ENCODE measurements at regions of chr17 and their contacts with region 1.

Region 1: DNA sequence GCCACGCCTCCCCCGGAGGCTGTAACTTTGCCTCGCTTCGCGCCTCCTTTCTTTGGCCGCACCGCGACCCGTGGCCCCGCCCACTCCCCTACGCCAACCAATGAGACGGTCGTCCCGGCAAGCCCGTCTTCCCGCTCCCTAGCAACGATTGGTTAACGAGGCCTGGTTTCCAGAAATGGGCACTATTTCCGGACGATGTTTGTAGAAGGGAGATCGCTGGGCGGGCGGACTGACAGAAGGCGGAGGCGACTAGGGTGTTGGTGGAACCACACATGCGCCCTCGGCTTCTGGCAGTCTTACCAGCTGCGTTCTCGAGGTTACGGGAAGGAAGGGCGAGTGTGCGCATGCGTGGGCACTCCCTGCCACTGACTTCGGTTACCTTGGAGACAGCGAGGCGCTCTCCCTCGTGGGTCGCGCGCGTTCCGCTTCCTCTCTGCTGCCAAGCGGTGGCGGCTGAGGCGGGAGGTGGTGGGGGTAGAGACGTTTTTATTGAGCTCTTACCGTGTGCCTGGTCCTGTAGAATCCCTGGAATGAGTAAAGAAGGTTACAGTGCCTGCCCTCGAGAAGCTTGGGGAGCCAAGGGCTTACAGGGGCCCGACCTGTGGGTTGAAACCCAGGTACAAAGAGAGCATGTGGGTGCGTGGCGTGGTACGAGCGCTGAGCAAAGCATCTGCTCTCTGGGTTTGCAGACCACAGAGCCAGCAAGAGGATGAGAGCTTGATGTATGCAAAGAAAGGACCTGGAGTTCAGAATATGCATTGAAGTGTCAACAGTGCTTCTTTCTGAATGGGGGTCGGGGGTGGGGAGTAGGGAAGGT is 500 bp upstream of the MAP3K14 start:
- DNase-seq: peak; percentile 95 to 100 (median 100)
- ATAC-seq: peak; percentile 85 to 86
- H3K4me3 Mint-ChIP-seq: peak overlapping the region; percentile 76 to 96 (median 94)
- H3K27ac Mint-ChIP-seq: peak overlapping the region; percentile 88 to 99 (median 96)
- H3K4me1 Mint-ChIP-seq: peaks cover 56 to 88% (median 85%) of the 10 kb centered on the region in 4 donors
- H3K27me3 Mint-ChIP-seq: peaks cover 0 to 4% (median 0%) of the 10 kb centered on the region in 5 donors

Region 2: DNA sequence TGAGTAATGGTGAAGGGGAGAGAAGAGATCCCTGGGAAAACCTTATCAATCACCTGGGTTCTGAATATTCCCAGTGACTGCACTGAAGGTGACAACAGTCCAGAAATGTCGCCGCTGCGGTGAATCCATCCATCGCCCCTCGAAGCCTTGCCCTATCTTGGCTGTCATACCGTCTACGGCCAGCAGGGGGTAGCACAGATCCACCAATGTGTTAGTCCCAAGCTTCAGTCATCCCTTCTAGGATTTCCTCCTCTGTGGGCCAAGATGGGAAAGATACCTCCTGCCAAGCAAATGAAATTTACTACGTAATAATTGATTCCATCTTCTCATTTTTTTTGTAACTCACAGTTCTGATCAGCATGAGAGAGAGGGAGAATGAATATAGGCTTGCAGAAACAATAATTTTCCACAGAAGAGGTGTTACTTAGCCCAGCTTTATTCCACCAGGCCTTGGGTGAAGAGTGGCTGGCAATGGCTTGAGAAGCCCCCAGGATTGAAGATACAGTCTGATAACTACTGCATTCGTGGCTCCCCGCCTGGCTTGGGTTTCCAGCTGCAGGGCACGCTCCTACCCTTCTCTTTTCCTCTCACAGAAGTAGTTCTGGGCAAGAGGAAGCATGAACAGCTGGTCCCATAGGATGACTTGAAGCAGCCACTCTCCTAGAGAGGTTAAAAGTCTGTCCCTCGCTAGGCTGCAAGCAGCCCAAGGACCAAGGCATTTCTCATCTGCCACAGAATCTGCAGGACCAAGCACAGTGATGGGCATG is 98.2 kb before region 1 on chr17:
- POLR2A ChIA-PET with region 1: interaction called, 115 read pairs
- DNase-seq: peak; percentile 70 to 95 (median 85)
- ATAC-seq: peak; percentile 20 to 28
- H3K4me3 Mint-ChIP-seq: peak overlapping the region; percentile 89 to 96 (median 92)
- H3K27ac Mint-ChIP-seq: peak overlapping the region; percentile 74 to 96 (median 87)
- H3K4me1 Mint-ChIP-seq: peaks cover 24 to 55% (median 41%) of the 10 kb centered on the region in 4 donors
- H3K27me3 Mint-ChIP-seq: no peaks in the 10 kb centered on the region

Region 3: DNA sequence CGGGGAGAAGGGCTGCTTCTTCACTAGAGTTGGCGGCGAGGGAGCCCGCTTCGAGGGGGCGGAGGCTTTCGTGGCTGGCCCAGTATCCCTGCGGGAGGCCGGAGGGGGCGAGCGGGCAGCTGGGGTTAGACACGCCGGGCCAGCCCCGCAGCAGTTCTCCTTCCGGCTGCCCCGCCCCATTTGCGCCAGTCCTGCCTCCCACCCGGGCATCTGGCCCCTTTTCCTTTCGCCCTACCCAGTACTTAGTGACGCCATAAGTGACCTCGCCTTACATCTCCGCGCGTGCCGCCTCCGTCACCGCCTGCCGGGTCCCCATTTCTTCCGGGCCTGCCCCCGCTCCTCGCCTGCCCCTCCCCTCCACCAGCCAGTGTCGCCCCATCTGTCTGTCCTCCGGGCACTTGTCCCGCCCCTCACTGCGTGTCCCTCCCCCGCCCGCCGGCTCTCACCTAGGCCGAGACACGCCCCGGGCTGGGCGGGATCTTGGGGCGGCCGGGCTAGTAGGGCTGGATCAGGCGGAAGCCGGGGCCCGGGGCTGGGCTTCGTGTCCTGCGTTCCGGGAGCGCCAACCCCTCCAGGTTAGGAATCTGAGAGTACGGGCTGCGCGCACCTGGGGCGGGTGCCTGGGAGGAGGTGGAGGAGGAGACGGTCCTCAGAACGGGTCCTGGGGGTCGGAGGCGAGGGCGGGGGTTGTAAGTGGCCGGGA is 69.7 kb before region 1 on chr17:
- POLR2A ChIA-PET with region 1: interaction called, 48 read pairs
- DNase-seq: peak; percentile 90 to 98 (median 92)
- ATAC-seq: peak; percentile 76 to 79
- H3K4me3 Mint-ChIP-seq: peak overlapping the region; percentile 85 to 93 (median 92)
- H3K27ac Mint-ChIP-seq: peak overlapping the region; percentile 92 to 99 (median 98)
- H3K4me1 Mint-ChIP-seq: peaks cover 20 to 73% (median 71%) of the 10 kb centered on the region in 4 donors
- H3K27me3 Mint-ChIP-seq: no peaks in the 10 kb centered on the region

Region 4: GRCh38 chr17:45284176-45285140 is 32.9 kb before region 1 on chr17:
- POLR2A ChIA-PET with region 1: interaction called, 11 read pairs
- DNase-seq: peak in 7 of 10 donors; percentile 12 to 68 (median 27)
- ATAC-seq: peak in 1 of 2 donors; percentile 50
- H3K4me3 Mint-ChIP-seq: no peak overlapping the region
- H3K27ac Mint-ChIP-seq: peak overlapping the region in 9 of 10 donors; percentile 36 to 87 (median 71)
- H3K4me1 Mint-ChIP-seq: peaks cover 2 to 24% (median 11%) of the 10 kb centered on the region in 4 donors
- H3K27me3 Mint-ChIP-seq: no peaks in the 10 kb centered on the region

Region 5: GRCh38 chr17:45332989-45333701 is 15.8 kb after region 1 on chr17:
- POLR2A ChIA-PET with region 1: no interaction called
- DNase-seq: no peak
- ATAC-seq: no peak
- H3K4me3 Mint-ChIP-seq: no peak overlapping the region
- H3K27ac Mint-ChIP-seq: peak overlapping the region in 3 of 10 donors; percentile 7 to 18 (median 15)
- H3K4me1 Mint-ChIP-seq: peaks cover 0 to 25% (median 0%) of the 10 kb centered on the region in 4 donors
- H3K27me3 Mint-ChIP-seq: peaks cover 0 to 3% (median 0%) of the 10 kb centered on the region in 5 donors

Region 6: DNA sequence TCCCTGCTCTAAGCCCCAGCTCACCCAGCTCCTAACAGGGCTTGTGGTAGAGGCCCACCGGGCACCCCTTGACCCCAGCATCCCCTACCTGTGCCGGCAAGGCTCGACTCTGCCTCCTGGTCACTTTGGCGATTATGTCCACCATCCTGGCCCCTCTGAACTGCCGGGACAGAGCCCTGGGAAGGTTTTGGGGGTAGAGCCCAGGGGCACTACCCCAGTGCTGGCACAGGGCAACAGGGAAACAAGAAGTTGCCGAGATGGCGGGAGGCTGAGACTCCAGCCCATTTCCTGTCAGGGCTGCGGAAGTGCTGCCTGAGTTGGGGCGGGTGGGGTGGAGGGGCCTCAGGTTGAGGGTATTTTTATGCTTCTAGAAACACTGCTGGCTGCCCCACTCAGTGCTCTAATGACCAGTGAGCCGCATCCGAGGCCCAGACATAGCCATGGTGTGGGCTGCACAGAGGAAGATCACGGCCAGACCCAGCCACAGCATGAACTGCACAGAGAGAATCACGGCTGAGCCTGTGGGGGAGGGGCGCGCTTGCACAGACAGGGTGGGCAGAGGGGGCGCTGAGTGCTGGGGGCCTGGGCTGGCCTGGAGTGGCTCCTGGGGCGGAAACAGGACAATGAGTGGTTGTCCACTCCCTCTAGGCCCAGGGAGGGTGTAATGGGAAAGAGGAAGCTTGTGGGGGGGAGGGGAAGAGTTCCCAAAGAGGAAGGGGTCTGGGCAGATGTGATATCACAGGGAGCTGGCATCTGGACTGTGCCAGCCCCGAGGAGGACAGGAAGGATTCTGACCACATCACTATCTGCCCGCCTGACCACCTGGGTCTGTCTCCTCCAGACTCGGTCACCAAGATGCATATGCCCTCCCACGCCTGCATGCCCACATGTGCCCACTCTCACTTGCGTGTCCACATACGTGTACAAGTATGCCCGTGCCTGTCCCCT is 93.1 kb after region 1 on chr17:
- POLR2A ChIA-PET with region 1: interaction called, 17 read pairs
- DNase-seq: peak; percentile 27 to 74 (median 54)
- ATAC-seq: peak; percentile 88 to 89
- H3K4me3 Mint-ChIP-seq: peak overlapping the region; percentile 96 to 100 (median 99)
- H3K27ac Mint-ChIP-seq: peak overlapping the region; percentile 94 to 100 (median 99)
- H3K4me1 Mint-ChIP-seq: peaks cover 32 to 83% (median 54%) of the 10 kb centered on the region in 4 donors
- H3K27me3 Mint-ChIP-seq: no peaks in the 10 kb centered on the region